ENCODE measurements at regions of chr4 and their contacts with region 1.

Region 1: DNA sequence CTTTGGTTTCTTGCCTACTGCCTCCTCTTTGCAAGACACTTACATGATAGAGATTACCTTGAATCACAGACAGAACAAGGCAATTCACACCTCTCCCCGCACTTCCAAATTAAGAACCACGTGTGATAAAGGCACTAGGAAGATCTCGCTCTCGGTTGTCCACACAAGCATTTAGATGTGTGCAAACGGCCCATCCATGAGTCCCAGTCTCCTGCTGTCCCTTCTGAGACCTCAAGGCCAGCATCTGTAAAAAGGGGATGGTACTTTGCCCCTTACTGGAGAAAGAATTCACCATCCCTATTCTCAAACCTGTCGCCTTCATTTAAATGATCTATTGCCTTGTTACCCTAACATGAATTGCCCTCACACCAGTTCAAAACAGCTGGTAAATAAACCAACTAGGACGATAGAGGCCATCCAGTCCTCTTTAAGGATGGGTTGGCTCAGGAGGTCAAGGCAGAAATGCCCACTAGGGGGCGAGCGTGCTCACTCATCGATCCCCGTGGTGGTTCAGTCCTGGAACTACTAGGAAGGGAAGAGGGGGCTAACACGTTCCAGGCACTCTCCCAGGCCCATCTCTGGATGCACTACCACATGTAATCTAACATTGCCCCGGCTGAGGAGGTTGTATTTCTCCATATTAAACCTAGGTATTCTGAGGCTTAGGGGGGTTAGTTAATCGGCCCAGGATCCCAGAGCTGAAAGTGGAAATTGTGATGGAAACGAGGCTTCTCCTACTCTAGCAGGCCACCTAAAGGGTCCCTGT is 95.8 kb downstream of the DHX15 start:
- DNase-seq: peak; percentile 56 to 67
- ATAC-seq: peak; percentile 88 to 99
- H3K4me3 ChIP-seq: no peak overlapping the region
- H3K27ac ChIP-seq: no peak overlapping the region
- H3K4me1 ChIP-seq: no peaks in the 10 kb centered on the region
- CTCF ChIP-seq: peak; percentile 60
- EP300 ChIP-seq: no peak
- POLR2A ChIP-seq: no peak
- RAD21 ChIP-seq: peak; percentile 63 to 75

Region 2: DNA sequence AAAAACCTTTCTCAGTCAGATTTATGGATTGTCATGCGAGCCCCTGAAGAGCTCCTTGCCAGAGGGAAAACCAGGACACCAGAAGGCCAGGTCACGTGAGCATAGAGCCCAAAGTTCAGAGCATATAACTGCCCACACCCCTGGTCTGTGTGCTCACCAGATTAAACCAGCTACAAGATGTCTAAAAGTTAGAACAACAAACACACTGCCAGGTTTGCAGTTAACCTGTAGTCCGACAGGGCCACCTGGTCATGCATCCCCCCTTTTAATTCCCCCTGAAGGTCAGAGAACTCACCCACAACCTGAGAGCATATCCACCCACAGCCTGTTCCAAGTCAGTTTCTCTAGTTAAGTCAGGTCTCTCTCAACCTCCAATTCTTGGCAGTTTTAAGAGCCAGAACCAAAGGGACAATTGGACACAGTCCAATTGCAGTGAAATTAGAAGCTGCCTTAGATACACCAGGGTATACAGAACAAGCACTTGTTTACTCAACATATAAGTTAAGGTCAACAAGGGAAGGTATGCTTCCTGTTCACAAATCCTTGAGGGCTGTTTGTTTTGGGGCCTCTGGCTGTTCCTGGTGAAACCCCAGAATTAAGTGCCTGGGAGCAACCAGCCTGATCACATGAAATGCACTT is 350.5 kb before region 1 on chr4:
- CTCF ChIA-PET with region 1: no interaction called
- POLR2A ChIA-PET with region 1: no interaction called
- DNase-seq: no peak
- ATAC-seq: no peak
- H3K4me3 ChIP-seq: no peak overlapping the region
- H3K27ac ChIP-seq: no peak overlapping the region
- H3K4me1 ChIP-seq: no peaks in the 10 kb centered on the region
- CTCF ChIP-seq: no peak
- EP300 ChIP-seq: no peak
- POLR2A ChIP-seq: no peak
- RAD21 ChIP-seq: no peak

Region 3: GRCh38 chr4:24476282-24476681 is 12.3 kb before region 1 on chr4:
- CTCF ChIA-PET with region 1: interaction called, 18 read pairs
- POLR2A ChIA-PET with region 1: no interaction called
- DNase-seq: peak in 1 of 2 experiments; percentile 21
- ATAC-seq: no peak
- H3K4me3 ChIP-seq: no peak overlapping the region
- H3K27ac ChIP-seq: no peak overlapping the region
- H3K4me1 ChIP-seq: peaks cover 3% of the 10 kb centered on the region; the same call in 1 of the 3 replicates
- CTCF ChIP-seq: peak; percentile 34
- EP300 ChIP-seq: no peak
- POLR2A ChIP-seq: no peak
- RAD21 ChIP-seq: peak in 1 of 2 experiments; percentile 18; a peak in 1 of 5 replicates